ENCODE measurements at regions of chr1 and their contacts with region 1.

Region 1: DNA sequence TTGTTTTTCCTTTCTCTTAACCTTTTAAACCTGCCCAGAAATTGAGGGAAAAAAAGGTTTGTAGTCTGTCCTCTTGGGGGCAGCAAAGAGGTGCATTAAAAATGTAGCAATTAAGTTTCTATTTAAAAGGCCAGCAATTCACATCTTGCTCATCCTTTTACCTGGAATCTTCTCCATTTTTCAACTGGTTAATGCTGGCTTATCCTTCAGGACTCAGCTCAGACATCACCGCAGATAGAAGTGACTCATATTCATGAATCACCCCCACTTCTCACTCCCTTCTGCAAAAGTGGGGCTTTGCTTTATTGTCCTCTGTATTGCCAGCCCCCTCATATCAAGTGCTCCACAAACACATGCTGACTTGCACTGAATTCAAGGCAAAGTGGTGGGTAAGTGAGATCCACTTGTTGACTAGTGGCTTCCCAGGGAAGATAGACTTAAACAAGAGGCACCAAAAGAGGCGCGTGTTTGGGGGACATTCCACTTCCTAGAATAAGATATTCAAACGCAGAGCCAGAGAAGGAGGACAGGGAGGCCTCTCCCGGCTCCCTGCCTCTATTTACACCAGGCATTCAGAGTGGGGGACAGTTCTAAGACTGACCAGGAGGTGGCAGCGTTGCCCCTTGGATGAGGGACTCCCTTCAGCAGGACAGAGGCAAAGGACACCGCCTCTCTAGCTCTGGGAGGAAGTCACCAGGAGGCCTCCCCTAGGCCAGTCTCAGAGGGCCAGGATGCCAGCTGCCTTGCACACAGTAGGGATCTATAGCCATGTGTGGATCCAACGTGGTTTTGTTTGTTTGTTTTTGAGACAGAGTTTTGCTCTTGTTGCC is 23.2 kb upstream of the ZNF648 start:
- DNase-seq: peak; percentile 96

Region 2: DNA sequence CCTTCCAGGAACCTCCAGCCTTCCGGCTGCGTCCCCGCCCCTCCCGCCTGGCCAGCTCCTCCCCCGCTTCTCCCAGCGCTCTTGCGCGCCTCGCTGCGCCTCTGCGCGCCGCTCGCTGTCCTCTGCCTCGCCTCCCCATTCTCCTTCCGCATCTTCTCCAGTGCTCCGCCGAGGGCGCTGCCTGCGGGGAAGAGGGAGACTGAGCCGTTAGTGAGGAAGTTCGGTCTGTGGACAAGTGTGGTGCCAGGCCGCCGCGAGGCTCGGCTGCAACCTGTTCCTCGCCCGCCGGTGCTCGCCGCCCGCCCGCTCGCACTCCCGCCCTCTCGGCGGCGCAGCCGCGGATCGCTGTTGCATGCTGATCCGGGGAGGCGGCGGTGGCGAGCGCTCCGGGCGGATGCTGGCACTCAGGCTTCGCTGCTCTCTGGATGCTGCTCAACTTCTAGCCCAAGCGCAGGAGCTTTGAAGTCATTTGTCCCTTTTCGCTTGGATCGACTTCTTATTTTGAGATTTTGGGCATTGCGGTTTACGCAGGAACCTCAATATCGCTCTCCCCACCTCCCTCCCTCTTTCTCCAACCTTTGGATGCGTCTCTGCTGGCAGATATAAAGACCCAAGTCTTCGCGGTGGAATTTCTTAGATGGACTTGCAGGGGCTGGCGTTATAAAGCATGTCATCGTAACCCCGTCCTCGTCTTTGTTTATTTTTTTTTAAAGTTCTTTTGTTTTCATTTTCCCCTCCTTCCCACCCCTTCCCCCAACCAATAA is 602.0 kb before region 1 on chr1:
- intact Hi-C with region 1: loop called in 1 of 2 experiments (anchors 5 kb)
- DNase-seq: peak; percentile 84

Region 3: GRCh38 chr1:182101415-182102042 is 16.8 kb after region 1 on chr1:
- intact Hi-C with region 1: loop called in 1 of 2 experiments (anchors 1 kb)
- DNase-seq: no peak

Region 4: DNA sequence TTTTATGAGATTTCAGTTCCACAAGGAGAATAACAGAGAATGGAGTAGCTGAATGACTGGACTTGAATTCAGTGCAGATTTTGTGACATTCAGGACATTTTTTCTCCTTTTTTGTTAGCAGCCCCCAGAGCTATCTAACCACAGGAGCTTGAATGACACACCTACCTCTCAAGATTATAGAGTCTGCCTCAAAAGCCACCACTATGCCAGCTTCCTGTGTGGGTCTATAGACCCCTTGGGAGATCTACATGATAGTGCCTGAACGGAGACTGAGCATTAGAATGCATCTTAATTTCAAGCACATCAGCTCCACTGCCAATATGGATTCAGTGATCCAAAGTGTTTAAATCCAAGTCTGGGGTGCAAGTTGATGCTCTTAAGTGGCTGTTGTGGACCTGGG is 51.2 kb after region 1 on chr1:
- intact Hi-C with region 1: loop called in 1 of 2 experiments (anchors 2 kb)
- DNase-seq: no peak

Region 5: DNA sequence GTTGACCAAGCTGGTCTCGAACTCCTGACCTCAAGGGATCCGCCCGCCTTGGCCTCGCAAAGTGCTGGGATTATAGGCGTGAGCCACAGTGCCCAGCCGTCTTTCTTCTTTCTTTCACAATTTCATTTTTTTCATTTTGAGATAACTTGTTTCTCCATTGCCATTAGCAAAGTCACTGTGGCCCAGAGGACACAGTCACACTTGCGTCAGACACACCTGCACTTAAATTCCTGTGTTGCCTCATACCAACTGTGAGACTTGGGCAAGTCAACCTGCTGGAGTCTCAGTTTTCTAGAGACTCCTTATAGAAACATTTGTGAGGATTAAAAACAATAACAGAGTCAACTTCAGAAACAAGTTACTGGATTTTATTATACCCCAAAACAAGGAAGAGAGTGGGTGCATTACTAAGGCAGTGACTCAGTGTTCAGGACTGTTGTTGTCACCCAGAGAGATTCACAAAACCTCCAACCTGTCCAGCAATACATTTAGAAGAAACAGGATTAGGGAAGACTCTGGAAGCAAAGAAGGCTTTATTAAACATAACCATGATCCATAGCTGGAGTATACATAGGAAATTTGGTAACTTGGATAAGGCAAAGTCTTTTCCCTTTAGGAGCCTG is 313.2 kb after region 1 on chr1:
- intact Hi-C with region 1: loop called (anchors 2 to 5 kb)
- DNase-seq: no peak